ENCODE measurements at regions of chr11 and their contacts with region 1.

Region 1: GRCh38 chr11:65652511-65653231 is 10.0 kb downstream of the RELA start:
- DNase-seq: peak; percentile 97
- H3K4me3 ChIP-seq: peak overlapping the region; percentile 36 to 60 (median 52)
- H3K27ac ChIP-seq: peak overlapping the region; percentile 90 to 98 (median 95)
- H3K4me1 ChIP-seq: peaks cover 0 to 40% (median 31%) of the 10 kb centered on the region in 4 donors
- H3K27me3 ChIP-seq: no peaks in the 10 kb centered on the region
- CTCF ChIP-seq: no peak
- EP300 ChIP-seq: no peak
- POLR2A ChIP-seq: peak; percentile 69 to 76

Region 2: GRCh38 chr11:64652586-64653387 is 999.9 kb before region 1 on chr11:
- intact Hi-C with region 1: no loop called
- DNase-seq: peak; percentile 91
- H3K4me3 ChIP-seq: no peak overlapping the region
- H3K27ac ChIP-seq: peak overlapping the region in 3 of 4 donors; percentile 26 to 50 (median 48)
- H3K4me1 ChIP-seq: peaks cover 0 to 15% (median 6%) of the 10 kb centered on the region in 4 donors
- H3K27me3 ChIP-seq: no peaks in the 10 kb centered on the region
- CTCF ChIP-seq: peak; percentile 93 to 98 (median 96)
- EP300 ChIP-seq: no peak
- POLR2A ChIP-seq: no peak

Region 3: GRCh38 chr11:65615229-65615941 is 37.3 kb before region 1 on chr11 and contains the start of gene PCNX3:
- intact Hi-C with region 1: loop called (anchors 2 kb)
- DNase-seq: peak; percentile 100
- H3K4me3 ChIP-seq: peak within 1 kb of the TSS; percentile 74 to 98 (median 88)
- H3K27ac ChIP-seq: peak within 1 kb of the TSS; percentile 89 to 95 (median 92)
- H3K4me1 ChIP-seq: peaks cover 0 to 58% (median 47%) of the 10 kb centered on the region in 4 donors
- H3K27me3 ChIP-seq: no peaks in the 10 kb centered on the region
- CTCF ChIP-seq: no peak
- EP300 ChIP-seq: peak in 1 of 4 donors; percentile 67
- POLR2A ChIP-seq: peak; percentile 52 to 65
- total RNA-seq, gene PCNX3: 10.7 to 21.3 (median 14.3) TPM

Region 4: DNA sequence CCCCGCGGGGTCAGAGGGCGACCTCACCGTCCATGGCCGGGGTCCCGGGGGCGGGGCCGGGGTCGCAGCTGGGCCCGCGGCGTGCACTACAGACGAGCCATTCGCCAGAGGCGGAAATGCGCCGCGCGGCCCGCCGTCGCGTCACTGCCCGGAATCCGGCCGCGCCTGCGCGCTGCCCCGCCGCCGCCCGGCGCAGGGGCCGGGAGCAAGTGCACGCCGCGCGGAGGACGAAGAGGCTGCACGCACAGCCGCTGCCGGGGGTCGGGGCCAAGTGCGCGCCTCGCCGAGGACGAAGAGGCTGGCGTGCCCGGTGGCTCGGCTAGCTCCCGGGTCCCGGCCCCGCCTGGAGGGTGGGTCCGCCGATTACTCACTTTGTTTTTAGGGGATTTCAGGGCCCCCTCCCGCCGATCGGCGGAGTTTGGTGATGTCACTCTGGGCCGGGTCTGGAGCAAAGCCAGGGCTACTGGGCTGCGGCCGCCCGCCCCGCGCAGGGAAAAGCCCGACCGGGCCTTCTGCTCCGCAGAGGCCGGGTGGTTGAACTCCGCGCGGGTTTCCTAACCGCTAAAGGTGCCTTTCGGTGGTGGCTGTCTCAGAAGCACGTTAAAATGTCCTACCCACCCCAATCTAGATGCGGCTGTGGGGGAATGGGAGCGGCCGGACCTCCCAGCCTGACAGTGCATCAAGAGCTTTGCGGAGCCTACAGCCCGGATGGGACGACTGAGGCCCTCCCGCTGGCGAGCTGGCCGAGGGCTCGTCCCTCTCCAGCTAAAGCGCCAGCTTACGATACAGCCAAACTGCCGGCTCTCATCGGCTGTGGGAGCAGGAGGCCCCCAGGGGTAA is 10.3 kb after region 1 on chr11 and contains the start of gene RELA:
- intact Hi-C with region 1: loop called (anchors 1 kb)
- DNase-seq: peak; percentile 98
- H3K4me3 ChIP-seq: peak within 1 kb of the TSS; percentile 78 to 97 (median 80)
- H3K27ac ChIP-seq: peak within 1 kb of the TSS; percentile 94 to 100 (median 98)
- H3K4me1 ChIP-seq: peaks cover 0 to 40% (median 37%) of the 10 kb centered on the region in 4 donors
- H3K27me3 ChIP-seq: no peaks in the 10 kb centered on the region
- CTCF ChIP-seq: no peak
- EP300 ChIP-seq: peak in 1 of 4 donors; percentile 19
- POLR2A ChIP-seq: peak; percentile 92 to 93
- total RNA-seq, gene RELA: 36.4 to 62.6 (median 46.9) TPM

Measured in sigmoid colon (tissue), 7 donors.